CD4-positive, alpha-beta T cell (primary cell): ENCODE measurements at regions of chr9 and their contacts with region 1.

Region 1: DNA sequence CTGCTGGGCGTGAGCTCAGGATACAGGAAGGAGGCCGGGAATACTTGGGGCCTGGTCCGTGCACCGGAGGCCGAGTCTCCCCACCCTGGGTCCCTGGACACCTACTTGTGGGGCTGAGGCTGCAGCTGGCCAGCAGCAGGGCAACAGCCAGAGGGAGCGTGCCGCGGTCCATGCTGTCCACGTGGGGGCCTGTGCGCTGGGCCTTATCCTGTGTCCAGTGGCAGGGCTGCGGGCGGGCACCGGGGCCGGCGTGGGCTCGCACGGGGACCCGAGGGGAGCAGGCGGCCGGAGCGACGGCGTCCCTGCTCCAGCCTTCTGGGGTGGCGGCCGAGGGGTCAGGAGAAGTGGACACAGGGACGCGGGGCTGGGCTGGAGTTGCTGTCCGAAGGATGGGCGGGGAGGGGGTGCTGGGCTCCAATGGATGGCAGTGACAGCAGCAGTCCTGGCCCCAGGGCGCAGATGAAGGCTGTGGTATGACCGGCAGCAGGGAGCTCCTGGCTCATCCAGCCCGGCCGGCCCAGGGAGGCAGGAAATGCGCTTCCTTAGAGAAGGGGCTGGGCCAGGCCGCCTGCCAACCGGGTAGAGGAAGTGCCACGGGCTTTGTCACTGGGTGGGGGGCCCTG is at the start of gene ENG:
- DNase-seq: peak in 3 of 14 experiments; percentile 38 to 51 (median 50)
- ATAC-seq: peak; percentile 59
- H3K4me3 ChIP-seq: peak within 1 kb of the TSS; percentile 68
- H3K4me3 Mint-ChIP-seq: peak within 1 kb of the TSS; percentile 91
- H3K27ac ChIP-seq: peak within 1 kb of the TSS; percentile 40 to 62
- H3K27ac Mint-ChIP-seq: peak within 1 kb of the TSS; percentile 83
- H3K4me1 ChIP-seq: peaks cover 54% of the 10 kb centered on the region
- H3K4me1 Mint-ChIP-seq: peaks cover 33% of the 10 kb centered on the region
- H3K27me3 ChIP-seq: no peaks in the 10 kb centered on the region
- H3K27me3 Mint-ChIP-seq: no peaks in the 10 kb centered on the region
- CTCF ChIP-seq: no peak
- total RNA-seq, gene ENG: 2.5 to 2.6 TPM

Region 2: GRCh38 chr9:127802576-127803443 is 51.5 kb before region 1 on chr9 and contains the start of gene FPGS:
- CTCF ChIA-PET with region 1: no interaction called
- POLR2A ChIA-PET with region 1: no interaction called
- intact Hi-C with region 1: loop called in 1 of 2 experiments (anchors 5 kb)
- DNase-seq: peak; percentile 63 to 94 (median 79)
- ATAC-seq: peak; percentile 90
- H3K4me3 ChIP-seq: peak within 1 kb of the TSS; percentile 79
- H3K4me3 Mint-ChIP-seq: peak within 1 kb of the TSS; percentile 91
- H3K27ac ChIP-seq: peak within 1 kb of the TSS; percentile 79
- H3K27ac Mint-ChIP-seq: peak within 1 kb of the TSS; percentile 80
- H3K4me1 ChIP-seq: peaks cover 29% of the 10 kb centered on the region
- H3K4me1 Mint-ChIP-seq: peaks cover 20% of the 10 kb centered on the region
- H3K27me3 ChIP-seq: no peaks in the 10 kb centered on the region
- H3K27me3 Mint-ChIP-seq: no peaks in the 10 kb centered on the region
- CTCF ChIP-seq: no peak
- total RNA-seq, gene FPGS: 58.0 to 66.6 TPM

Region 3: GRCh38 chr9:127877566-127877998 is 23.3 kb after region 1 on chr9 and contains the start of gene AK1:
- CTCF ChIA-PET with region 1: no interaction called
- POLR2A ChIA-PET with region 1: no interaction called
- intact Hi-C with region 1: no loop called
- DNase-seq: no peak
- ATAC-seq: no peak
- H3K4me3 ChIP-seq: no peak within 1 kb of the TSS
- H3K4me3 Mint-ChIP-seq: no peak within 1 kb of the TSS
- H3K27ac ChIP-seq: no peak within 1 kb of the TSS
- H3K27ac Mint-ChIP-seq: no peak within 1 kb of the TSS
- H3K4me1 ChIP-seq: peaks cover 9% of the 10 kb centered on the region
- H3K4me1 Mint-ChIP-seq: no peaks in the 10 kb centered on the region
- H3K27me3 ChIP-seq: peaks cover 5 to 6% of the 10 kb centered on the region in 2 experiments
- H3K27me3 Mint-ChIP-seq: no peaks in the 10 kb centered on the region
- CTCF ChIP-seq: no peak
- total RNA-seq, gene AK1: 46.7 to 52.6 TPM